Mammary epithelial cell (primary cell): ENCODE measurements at regions of chr13 and their contacts with region 1.

Region 1: GRCh38 chr13:74036373-74036772 is 97.8 kb downstream of the KLF12 start:
- DNase-seq: peak; percentile 87
- H3K4me3 ChIP-seq: no peak overlapping the region
- H3K27ac ChIP-seq: peak overlapping the region; percentile 10
- H3K4me1 ChIP-seq: peaks cover 9% of the 10 kb centered on the region
- H3K27me3 ChIP-seq: no peaks in the 10 kb centered on the region
- CTCF ChIP-seq: no peak

Region 2: DNA sequence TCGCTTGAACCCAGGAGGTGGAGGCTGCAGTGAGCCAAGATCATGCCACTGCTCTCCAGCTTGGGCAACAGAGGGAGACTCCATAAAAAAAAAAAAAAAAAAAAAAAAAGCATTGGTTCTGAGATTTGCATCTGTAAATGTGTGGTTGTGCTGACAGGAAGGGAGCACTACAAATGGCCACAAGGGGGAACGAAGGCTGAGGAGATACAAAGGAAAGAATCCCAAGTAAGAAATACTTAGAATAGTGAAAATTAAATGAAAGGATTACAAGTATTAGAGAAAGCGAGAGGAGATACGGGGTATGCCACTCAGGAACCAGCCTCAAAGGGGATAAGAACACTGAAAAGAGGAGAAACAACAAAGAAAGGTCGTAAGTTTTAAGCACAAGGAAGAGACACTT is 187.1 kb before region 1 on chr13:
- CTCF ChIA-PET with region 1: no interaction called
- dilution Hi-C with region 1: no loop called
- in situ Hi-C with region 1: no loop called
- intact Hi-C with region 1: loop called (anchors 10 kb)
- DNase-seq: no peak
- H3K4me3 ChIP-seq: no peak overlapping the region
- H3K27ac ChIP-seq: no peak overlapping the region
- H3K4me1 ChIP-seq: no peaks in the 10 kb centered on the region
- H3K27me3 ChIP-seq: no peaks in the 10 kb centered on the region
- CTCF ChIP-seq: peak; percentile 39 to 41

Region 3: GRCh38 chr13:74142257-74142656 is 105.9 kb after region 1 on chr13:
- CTCF ChIA-PET with region 1: no interaction called
- dilution Hi-C with region 1: no loop called
- in situ Hi-C with region 1: no loop called
- intact Hi-C with region 1: no loop called
- DNase-seq: no peak
- H3K4me3 ChIP-seq: no peak overlapping the region
- H3K27ac ChIP-seq: no peak overlapping the region
- H3K4me1 ChIP-seq: no peaks in the 10 kb centered on the region
- H3K27me3 ChIP-seq: no peaks in the 10 kb centered on the region
- CTCF ChIP-seq: no peak